ENCODE measurements at regions of chr15 and their contacts with region 1.

Region 1: GRCh38 chr15:43776718-43777583 is at the start of gene ELL3:
- DNase-seq: peak; percentile 81
- H3K4me3 Mint-ChIP-seq: peak within 1 kb of the TSS; percentile 81
- H3K27ac Mint-ChIP-seq: peak within 1 kb of the TSS; percentile 63
- H3K4me1 Mint-ChIP-seq: peaks cover 16% of the 10 kb centered on the region
- H3K27me3 Mint-ChIP-seq: peaks cover 21% of the 10 kb centered on the region
- total RNA-seq, gene ELL3: 0.25 to 0.33 TPM

Region 2: DNA sequence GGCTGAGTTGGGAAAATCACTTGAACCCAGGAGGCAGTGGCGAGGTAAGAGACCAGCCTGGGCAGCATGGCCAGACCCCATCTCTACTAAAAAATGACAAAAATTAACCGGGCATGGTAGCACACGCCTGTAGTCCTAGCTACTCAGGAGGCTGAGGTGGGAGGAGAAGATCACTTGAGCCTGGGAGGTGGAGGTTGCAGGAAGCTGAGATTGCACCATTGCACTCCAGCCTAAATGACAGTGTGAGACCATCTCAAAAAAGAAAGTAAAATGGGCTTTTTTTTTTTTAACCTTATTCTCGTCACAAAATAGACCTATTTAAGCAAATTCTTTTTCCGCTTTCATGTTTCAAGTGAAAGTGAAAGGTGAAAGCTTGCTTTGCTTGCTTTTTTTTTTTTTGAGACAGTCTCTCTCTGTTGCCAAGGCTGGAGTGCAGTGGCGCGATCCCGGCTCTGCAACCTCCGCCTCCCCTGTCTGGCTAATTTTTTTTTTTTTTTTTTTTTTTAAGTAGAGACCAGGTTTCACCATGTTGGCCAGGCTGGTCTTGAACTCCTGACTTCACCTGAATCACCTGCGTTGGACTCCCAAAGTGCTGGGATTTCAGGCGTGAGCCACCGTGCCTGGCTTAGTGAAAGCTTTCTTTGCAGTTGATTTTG is 27.1 kb before region 1 on chr15:
- CTCF ChIA-PET with region 1: interaction called, 4 read pairs
- POLR2A ChIA-PET with region 1: interaction called, 16 read pairs
- DNase-seq: peak; percentile 60
- H3K4me3 Mint-ChIP-seq: peak overlapping the region; percentile 56
- H3K27ac Mint-ChIP-seq: peak overlapping the region; percentile 83
- H3K4me1 Mint-ChIP-seq: peaks cover 43% of the 10 kb centered on the region
- H3K27me3 Mint-ChIP-seq: no peaks in the 10 kb centered on the region

Region 3: DNA sequence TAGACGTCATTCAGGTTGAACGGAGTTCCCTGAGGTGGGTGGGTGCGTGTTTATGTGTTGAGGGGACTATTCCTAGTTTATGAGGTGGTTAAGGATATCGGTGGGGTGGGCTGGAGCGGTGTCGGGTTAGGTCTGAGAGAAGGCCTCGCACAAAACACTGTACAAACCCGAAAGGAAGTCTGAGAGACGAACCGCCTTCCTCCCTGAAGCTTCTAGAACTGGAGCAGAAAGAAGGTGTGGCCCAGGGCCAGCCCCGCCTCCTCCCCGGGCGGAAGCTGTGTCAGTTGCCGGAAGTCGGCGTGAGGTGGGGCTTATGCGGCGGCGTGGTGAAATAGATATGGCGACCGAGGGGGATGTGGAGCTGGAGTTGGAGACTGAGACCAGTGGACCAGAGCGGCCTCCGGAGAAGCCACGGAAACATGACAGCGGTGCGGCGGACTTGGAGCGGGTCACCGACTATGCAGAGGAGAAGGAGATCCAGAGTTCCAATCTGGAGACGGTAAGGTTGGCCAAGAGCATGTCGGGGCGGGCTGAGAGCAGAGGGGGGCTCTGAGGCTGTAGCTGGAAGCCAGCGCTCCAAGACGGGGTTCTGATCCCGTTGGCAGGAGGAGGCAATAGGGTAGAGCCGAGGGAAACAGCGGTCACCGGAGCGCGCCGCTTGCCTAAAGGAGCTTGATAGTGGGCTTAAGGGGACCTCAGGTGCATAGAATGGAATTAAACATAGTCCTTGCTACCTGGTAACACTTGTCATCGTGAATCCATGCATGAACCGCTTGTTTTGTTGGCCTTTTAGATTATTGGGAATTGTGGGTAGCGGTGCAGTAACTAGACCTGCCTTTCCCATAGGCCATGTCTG is 23.6 kb after region 1 on chr15 and contains the start of gene HYPK:
- CTCF ChIA-PET with region 1: interaction called, 9 read pairs
- POLR2A ChIA-PET with region 1: interaction called, 21 read pairs
- DNase-seq: peak; percentile 94
- H3K4me3 Mint-ChIP-seq: peak within 1 kb of the TSS; percentile 100
- H3K27ac Mint-ChIP-seq: peak within 1 kb of the TSS; percentile 93
- H3K4me1 Mint-ChIP-seq: peaks cover 47% of the 10 kb centered on the region
- H3K27me3 Mint-ChIP-seq: no peaks in the 10 kb centered on the region
- total RNA-seq, gene HYPK: 14.3 to 14.4 TPM

Region 4: GRCh38 chr15:43824302-43825246 is 47.6 kb after region 1 on chr15 and contains the start of gene MFAP1:
- CTCF ChIA-PET with region 1: interaction called, 3 read pairs
- POLR2A ChIA-PET with region 1: interaction called, 13 read pairs
- DNase-seq: peak; percentile 93
- H3K4me3 Mint-ChIP-seq: peak within 1 kb of the TSS; percentile 98
- H3K27ac Mint-ChIP-seq: peak within 1 kb of the TSS; percentile 93
- H3K4me1 Mint-ChIP-seq: peaks cover 71% of the 10 kb centered on the region
- H3K27me3 Mint-ChIP-seq: no peaks in the 10 kb centered on the region
- total RNA-seq, gene MFAP1: 34.4 to 37.3 TPM

Region 5: DNA sequence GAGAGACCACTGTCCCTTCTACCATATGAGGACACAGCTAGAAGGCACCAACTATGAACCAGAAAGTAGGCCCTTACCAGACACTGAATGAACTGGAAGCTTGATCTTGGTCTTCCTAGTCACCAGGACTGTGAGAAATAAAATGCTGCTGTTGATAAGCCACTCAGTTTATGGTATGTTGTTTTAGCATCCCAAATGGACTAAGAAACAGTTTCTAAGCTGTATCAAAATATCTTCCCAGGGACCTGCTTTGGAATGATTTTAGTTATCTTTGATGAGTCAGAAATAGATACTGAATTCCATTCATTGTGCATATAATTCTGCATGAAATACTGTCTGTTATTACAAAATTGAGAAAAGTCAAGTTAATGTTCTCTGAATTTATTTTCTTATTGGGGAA is 68.5 kb after region 1 on chr15:
- CTCF ChIA-PET with region 1: no interaction called
- POLR2A ChIA-PET with region 1: no interaction called
- DNase-seq: no peak
- H3K4me3 Mint-ChIP-seq: no peak overlapping the region
- H3K27ac Mint-ChIP-seq: no peak overlapping the region
- H3K4me1 Mint-ChIP-seq: peaks cover 4% of the 10 kb centered on the region
- H3K27me3 Mint-ChIP-seq: no peaks in the 10 kb centered on the region

Region 6: GRCh38 chr15:43966646-43967045 is 189.7 kb after region 1 on chr15:
- CTCF ChIA-PET with region 1: no interaction called
- POLR2A ChIA-PET with region 1: no interaction called
- DNase-seq: no peak
- H3K4me3 Mint-ChIP-seq: no peak overlapping the region
- H3K27ac Mint-ChIP-seq: no peak overlapping the region
- H3K4me1 Mint-ChIP-seq: no peaks in the 10 kb centered on the region
- H3K27me3 Mint-ChIP-seq: peaks cover 16% of the 10 kb centered on the region

Measured in activated CD4-positive, alpha-beta memory T cell treated with anti-CD3 and anti-CD28 coated beads, Interleukin-2, amount 10 ng/mL, durations not matched to agents 7 days and 5 days (primary cell).